ENCODE measurements at regions of chr15 and their contacts with region 1.

Region 1: GRCh38 chr15:44195151-44195740 is at the start of gene FRMD5:
- DNase-seq: peak; percentile 92 to 99 (median 97)

Region 2: GRCh38 chr15:44144184-44144583 is 51.1 kb before region 1 on chr15:
- intact Hi-C with region 1: loop called (anchors 10 kb)
- DNase-seq: no peak

Measured in head of caudate nucleus (tissue), 42 donors.